ENCODE measurements at regions of chr3 and their contacts with region 1.

Region 1: GRCh38 chr3:58217209-58217811 is 6.5 kb upstream of the DNASE1L3 start:
- DNase-seq: peak; percentile 76 to 92
- ATAC-seq: peak; percentile 98 to 99
- H3K4me3 ChIP-seq: no peak overlapping the region
- H3K27ac ChIP-seq: peak overlapping the region; percentile 70 to 86
- H3K4me1 ChIP-seq: peaks cover 24% of the 10 kb centered on the region
- CTCF ChIP-seq: peak; percentile 78
- EP300 ChIP-seq: no peak
- POLR2A ChIP-seq: no peak
- RAD21 ChIP-seq: peak; percentile 54

Region 2: DNA sequence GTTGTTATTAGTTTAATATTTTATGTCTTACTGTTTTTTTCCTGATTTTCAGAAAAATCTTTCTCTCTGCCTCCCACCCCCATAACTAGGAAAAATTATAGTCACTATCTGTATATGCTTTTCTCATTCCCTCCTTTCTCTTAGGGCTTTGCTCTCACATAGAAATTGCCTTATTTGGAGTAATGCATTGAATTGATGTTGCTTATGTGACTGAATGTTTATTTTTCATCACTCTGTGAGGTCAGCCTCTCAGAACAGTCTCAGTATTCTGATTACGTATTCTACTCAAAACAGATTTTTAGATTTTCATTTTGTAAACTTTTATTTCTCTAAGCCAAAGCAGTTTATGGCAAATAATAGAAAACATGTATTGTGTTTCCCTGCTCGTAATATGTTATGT is 340.2 kb before region 1 on chr3:
- CTCF ChIA-PET with region 1: no interaction called
- POLR2A ChIA-PET with region 1: no interaction called
- DNase-seq: no peak
- ATAC-seq: no peak
- H3K4me3 ChIP-seq: no peak overlapping the region
- H3K27ac ChIP-seq: no peak overlapping the region
- H3K4me1 ChIP-seq: peaks cover 10% of the 10 kb centered on the region; the same call in 2 of the 3 replicates
- CTCF ChIP-seq: no peak
- EP300 ChIP-seq: no peak
- POLR2A ChIP-seq: no peak
- RAD21 ChIP-seq: no peak

Region 3: GRCh38 chr3:58099865-58100264 is 117.4 kb before region 1 on chr3:
- CTCF ChIA-PET with region 1: no interaction called
- POLR2A ChIA-PET with region 1: no interaction called
- DNase-seq: no peak
- ATAC-seq: no peak
- H3K4me3 ChIP-seq: no peak overlapping the region
- H3K27ac ChIP-seq: peak overlapping the region in 1 of 2 experiments; percentile 22; a peak in 1 of 6 replicates
- H3K4me1 ChIP-seq: peaks cover 52% of the 10 kb centered on the region
- CTCF ChIP-seq: no peak
- EP300 ChIP-seq: no peak
- POLR2A ChIP-seq: no peak
- RAD21 ChIP-seq: no peak

Region 4: DNA sequence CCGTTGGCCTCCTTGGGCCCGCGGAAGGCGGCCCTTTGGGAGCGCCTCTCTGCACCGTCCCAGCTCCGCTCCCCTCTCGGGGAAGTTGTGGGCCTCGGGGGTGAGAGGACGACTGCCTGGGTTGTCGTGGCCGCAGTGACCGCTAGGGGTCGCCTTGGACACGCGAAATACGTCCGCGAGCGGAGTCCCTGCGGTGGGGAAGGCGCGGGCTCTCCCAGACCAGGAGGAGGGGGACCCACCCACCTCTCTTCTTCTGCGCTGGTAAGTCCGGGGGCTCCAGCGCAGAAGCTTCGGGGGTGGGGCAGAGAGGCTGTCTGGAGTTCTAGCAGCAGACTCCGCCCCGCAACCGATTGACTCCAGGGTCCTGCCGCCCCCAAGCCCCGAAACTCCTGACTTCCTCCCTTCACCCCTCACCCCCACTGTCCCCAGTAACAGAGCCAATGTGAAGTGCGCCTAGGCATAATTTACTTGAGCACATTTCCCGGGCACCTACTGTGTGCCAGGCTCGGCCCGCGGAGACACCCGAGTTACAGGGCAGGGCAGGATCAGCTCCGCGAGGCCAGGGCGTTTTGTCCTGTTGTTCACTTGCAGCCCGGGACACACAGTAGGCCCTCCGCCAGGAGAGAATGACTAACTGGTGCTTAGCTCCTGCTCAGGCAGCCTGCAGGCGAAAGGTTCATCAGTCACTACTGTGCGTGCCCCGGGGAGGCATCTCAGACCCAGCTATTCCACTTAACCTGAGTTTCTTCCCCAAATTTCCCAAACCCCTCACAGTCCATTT is 39.4 kb before region 1 on chr3:
- CTCF ChIA-PET with region 1: interaction called, 25 read pairs
- POLR2A ChIA-PET with region 1: no interaction called
- DNase-seq: peak; percentile 69 to 80
- ATAC-seq: peak; percentile 27 to 70
- H3K4me3 ChIP-seq: no peak overlapping the region
- H3K27ac ChIP-seq: peak overlapping the region; percentile 48 to 98
- H3K4me1 ChIP-seq: peaks cover 75% of the 10 kb centered on the region
- CTCF ChIP-seq: peak; percentile 75
- EP300 ChIP-seq: no peak
- POLR2A ChIP-seq: no peak
- RAD21 ChIP-seq: peak; percentile 57 to 62

Region 5: GRCh38 chr3:58206406-58207011 is 10.8 kb before region 1 on chr3:
- CTCF ChIA-PET with region 1: interaction called, 28 read pairs
- POLR2A ChIA-PET with region 1: no interaction called
- DNase-seq: peak in 1 of 2 experiments; percentile 22
- ATAC-seq: peak; percentile 50 to 76
- H3K4me3 ChIP-seq: no peak overlapping the region
- H3K27ac ChIP-seq: peak overlapping the region in 1 of 2 experiments; percentile 49; a peak in 3 of 6 replicates
- H3K4me1 ChIP-seq: peaks cover 10% of the 10 kb centered on the region; the same call in 2 of the 3 replicates
- CTCF ChIP-seq: no peak
- EP300 ChIP-seq: no peak
- POLR2A ChIP-seq: no peak
- RAD21 ChIP-seq: no peak

Region 6: DNA sequence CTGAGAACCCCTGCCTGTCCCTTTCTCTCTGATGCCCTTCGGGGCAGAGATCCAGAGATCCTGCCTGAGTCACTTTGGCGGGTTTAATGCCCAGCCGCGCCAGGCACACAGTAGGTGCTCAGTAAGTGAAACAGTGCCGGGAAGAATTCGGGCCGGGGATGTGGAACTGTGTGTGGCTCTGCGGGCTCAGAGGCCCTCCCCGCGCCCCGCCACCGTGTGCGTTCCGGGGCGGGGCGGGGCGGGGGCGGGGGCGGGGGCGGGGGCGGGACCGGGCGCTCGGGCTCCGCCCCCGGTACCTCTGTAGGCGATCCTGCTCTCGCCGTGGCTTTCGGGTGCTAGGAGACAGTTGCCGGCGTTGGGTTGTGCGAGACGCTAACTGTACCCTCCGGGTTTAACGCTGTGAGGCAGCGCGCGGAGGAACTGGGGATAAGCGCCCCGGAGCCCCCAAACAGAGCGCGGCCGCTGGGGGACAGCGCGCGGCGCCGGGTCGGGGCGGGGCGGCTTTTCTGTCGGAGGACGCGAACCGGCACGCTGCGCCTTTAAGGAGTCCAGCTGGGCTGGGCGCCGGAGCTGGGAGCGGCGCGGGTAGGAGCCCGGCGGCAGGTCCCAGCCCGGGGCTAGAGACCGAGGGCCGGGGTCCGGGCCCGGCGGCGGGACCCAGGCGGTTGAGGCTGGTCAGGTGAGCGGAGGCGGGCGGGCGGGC is 20.1 kb after region 1 on chr3 and contains the start of gene ABHD6:
- CTCF ChIA-PET with region 1: interaction called, 53 read pairs
- POLR2A ChIA-PET with region 1: interaction called, 10 read pairs
- DNase-seq: peak; percentile 58 to 61
- ATAC-seq: peak; percentile 84 to 92
- H3K4me3 ChIP-seq: peak within 1 kb of the TSS; percentile 91
- H3K27ac ChIP-seq: peak within 1 kb of the TSS; percentile 86 to 98
- H3K4me1 ChIP-seq: peaks cover 25% of the 10 kb centered on the region
- CTCF ChIP-seq: peak; percentile 37
- EP300 ChIP-seq: no peak
- POLR2A ChIP-seq: peak; percentile 24; the same call in 1 of the 2 replicates
- RAD21 ChIP-seq: peak; percentile 42 to 69
- polyA plus RNA-seq, gene ABHD6: 10.1 and 13.8 TPM in 2 replicates

Region 7: GRCh38 chr3:58271901-58272501 is 54.7 kb after region 1 on chr3:
- CTCF ChIA-PET with region 1: interaction called, 19 read pairs
- POLR2A ChIA-PET with region 1: no interaction called
- DNase-seq: peak; percentile 42 to 49
- ATAC-seq: peak in 1 of 2 experiments; percentile 64; a peak in 2 of 6 replicates
- H3K4me3 ChIP-seq: no peak overlapping the region
- H3K27ac ChIP-seq: peak overlapping the region in 1 of 2 experiments; percentile 61; a peak in 2 of 6 replicates
- H3K4me1 ChIP-seq: peaks cover 10% of the 10 kb centered on the region
- CTCF ChIP-seq: no peak
- EP300 ChIP-seq: no peak
- POLR2A ChIP-seq: no peak
- RAD21 ChIP-seq: no peak

Region 8: DNA sequence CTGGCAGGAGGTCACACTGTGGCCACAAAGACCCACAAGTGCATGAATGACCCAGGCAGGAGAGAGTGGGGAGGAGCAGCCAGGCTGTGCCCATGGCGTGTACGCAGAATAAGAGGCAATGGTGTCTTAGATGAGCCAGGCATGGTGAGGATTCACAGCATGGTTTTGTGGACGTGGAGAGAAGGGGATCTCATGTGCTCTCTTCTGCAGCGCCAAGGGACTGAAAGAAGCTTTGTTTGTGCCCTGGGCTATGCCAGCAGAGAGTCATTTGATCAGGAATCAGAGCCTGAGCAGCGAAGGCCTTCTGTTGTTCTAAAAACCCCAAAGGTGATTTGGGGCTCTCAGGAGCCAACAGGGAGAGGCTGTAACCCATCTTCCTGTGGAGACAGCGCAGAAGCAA is 70.0 kb after region 1 on chr3:
- CTCF ChIA-PET with region 1: no interaction called
- POLR2A ChIA-PET with region 1: no interaction called
- DNase-seq: no peak
- ATAC-seq: no peak
- H3K4me3 ChIP-seq: no peak overlapping the region
- H3K27ac ChIP-seq: no peak overlapping the region
- H3K4me1 ChIP-seq: no peaks in the 10 kb centered on the region
- CTCF ChIP-seq: no peak
- EP300 ChIP-seq: no peak
- POLR2A ChIP-seq: no peak
- RAD21 ChIP-seq: no peak

Region 9: GRCh38 chr3:58299839-58300516 is 82.7 kb after region 1 on chr3:
- CTCF ChIA-PET with region 1: interaction called, 52 read pairs
- POLR2A ChIA-PET with region 1: no interaction called
- DNase-seq: peak in 1 of 2 experiments; percentile 49
- ATAC-seq: peak in 1 of 2 experiments; percentile 61; a peak in 3 of 6 replicates
- H3K4me3 ChIP-seq: no peak overlapping the region
- H3K27ac ChIP-seq: no peak overlapping the region
- H3K4me1 ChIP-seq: peaks cover 12% of the 10 kb centered on the region; the same call in 2 of the 3 replicates
- CTCF ChIP-seq: peak; percentile 71
- EP300 ChIP-seq: no peak
- POLR2A ChIP-seq: no peak
- RAD21 ChIP-seq: peak; percentile 70 to 74

Measured in A549 (cell line).